ENCODE measurements at regions of chr13 and their contacts with region 1.

Region 1: GRCh38 chr13:99980201-99980823 is 1.3 kb upstream of the ZIC2 start:
- DNase-seq: peak; percentile 88
- CTCF ChIP-seq: peak; percentile 9

Region 2: GRCh38 chr13:100184095-100184494 is 203.8 kb after region 1 on chr13:
- in situ Hi-C with region 1: no loop called
- DNase-seq: no peak
- CTCF ChIP-seq: no peak

Region 3: DNA sequence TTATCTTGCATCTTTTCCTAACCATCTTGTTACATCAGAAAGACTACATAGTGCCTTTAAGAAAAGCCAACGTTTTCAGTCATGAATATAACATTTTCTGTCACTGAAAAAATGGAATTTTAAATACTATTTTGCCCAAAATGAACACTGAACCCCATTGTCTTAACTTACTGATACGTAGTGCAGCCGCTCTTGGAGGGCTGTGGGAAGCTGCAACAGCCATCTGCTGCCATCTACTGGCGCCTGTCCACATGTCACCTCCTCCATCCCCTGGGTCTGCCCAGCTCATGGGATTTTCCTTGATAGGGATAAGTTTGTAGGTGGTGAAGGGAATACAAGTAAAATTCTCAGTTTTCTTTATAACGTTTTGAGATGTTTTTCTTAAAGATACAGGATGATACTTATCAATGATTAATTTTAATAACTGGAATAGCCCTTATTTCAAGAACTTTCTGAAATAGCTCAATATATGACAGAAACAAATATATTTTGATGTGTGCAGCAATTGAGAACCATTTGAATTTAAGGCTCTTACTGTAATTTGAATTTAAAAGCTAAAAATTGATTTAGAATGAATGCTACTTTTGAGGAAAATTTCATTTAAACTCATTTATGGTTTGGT is 534.6 kb after region 1 on chr13:
- in situ Hi-C with region 1: loop called (anchors 25 kb)
- DNase-seq: peak; percentile 88
- CTCF ChIP-seq: peak; percentile 91

Region 4: GRCh38 chr13:100633461-100633860 is 653.1 kb after region 1 on chr13:
- in situ Hi-C with region 1: no loop called
- DNase-seq: no peak
- CTCF ChIP-seq: no peak